Mammary epithelial cell (primary cell): ENCODE measurements at regions of chr2 and their contacts with region 1.

Region 1: DNA sequence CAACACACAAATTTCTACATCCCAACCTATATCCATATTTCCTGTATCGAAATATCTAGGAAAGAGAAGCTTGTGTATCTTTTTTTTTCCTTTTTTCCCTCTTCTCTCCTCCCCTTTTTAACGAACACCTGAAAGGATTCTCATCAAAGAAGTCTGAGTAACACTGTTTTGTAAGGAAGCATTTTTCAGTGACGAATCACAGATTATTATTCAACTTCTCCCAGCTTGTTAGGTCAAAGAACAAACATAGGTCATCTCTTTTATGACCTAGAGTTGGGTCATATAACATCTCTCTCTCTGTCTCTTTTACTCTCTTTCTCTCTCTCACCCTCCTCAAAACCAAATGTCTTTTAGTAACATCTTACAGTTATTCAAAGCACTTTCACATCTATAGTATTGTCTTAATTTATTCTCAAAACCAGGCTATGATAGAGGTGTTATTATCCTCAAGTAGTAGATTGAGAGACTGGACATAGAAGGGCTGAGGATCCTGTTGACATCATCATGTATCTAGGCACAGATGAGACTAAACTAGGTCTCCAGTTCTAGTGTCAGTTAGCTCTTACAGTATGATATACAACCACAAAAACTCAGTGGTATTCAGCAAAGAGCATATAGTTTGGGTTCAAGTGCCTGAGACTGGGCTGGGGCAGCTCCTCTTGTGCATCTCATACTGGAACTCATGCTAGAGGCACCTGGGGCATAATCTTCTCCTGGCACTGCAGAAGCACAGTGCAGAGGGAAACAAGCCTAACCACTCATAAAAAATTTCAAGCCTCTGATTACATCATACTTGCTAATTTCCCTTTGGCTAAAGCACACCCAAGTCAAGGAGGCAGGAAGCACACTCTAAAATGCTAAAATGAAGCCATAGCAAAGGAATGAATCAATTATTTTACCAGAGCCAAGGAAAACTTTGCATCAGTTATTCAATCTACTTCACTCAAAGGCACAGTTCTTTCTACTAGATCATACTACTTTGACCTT is 80.0 kb upstream of the SPOPL start:
- DNase-seq: peak; percentile 91
- H3K4me3 ChIP-seq: no peak overlapping the region
- H3K27ac ChIP-seq: peak overlapping the region; percentile 82
- H3K4me1 ChIP-seq: peaks cover 23% of the 10 kb centered on the region
- H3K27me3 ChIP-seq: no peaks in the 10 kb centered on the region
- CTCF ChIP-seq: no peak

Region 2: GRCh38 chr2:137764646-137765045 is 657.0 kb before region 1 on chr2:
- CTCF ChIA-PET with region 1: no interaction called
- dilution Hi-C with region 1: no loop called
- in situ Hi-C with region 1: no loop called
- intact Hi-C with region 1: no loop called
- DNase-seq: no peak
- H3K4me3 ChIP-seq: no peak overlapping the region
- H3K27ac ChIP-seq: no peak overlapping the region
- H3K4me1 ChIP-seq: no peaks in the 10 kb centered on the region
- H3K27me3 ChIP-seq: no peaks in the 10 kb centered on the region
- CTCF ChIP-seq: no peak

Region 3: DNA sequence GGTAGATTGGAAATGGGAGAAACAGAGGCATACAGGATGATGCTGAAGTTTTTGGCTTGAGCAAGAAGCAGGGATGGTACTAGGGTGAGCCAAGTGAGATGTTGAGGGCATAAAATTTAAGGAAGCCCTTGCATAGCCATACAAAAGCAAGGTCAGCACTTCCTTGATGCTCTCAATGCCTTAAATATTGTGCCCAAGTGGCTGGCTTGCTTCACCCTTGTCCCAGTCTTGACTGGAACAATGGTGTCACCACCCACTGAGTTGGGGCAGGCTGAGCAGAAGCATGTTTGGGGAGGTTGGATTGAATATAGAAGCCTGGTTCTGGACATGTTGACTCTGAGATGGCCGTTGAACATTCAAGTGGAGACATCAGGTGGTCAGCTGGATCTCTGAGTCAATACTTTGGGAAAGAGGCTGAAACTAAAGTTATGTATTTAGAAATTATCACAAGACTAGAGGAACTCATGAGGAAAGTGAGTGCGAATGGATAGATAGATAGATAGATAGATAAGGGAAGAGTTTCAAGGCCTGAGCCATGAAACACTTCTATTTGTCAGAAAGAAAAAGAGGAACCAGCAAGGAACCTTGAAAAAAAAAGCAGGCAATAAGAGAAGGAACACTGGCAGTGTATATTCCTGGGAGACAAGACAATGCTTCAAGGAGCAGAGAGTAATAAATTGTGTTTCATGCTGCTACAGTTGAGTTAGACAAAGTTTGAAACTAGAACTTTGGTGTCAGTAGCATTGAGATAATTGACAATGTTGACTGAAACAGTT is 500.3 kb before region 1 on chr2:
- CTCF ChIA-PET with region 1: no interaction called
- dilution Hi-C with region 1: no loop called
- in situ Hi-C with region 1: no loop called
- intact Hi-C with region 1: no loop called
- DNase-seq: no peak
- H3K4me3 ChIP-seq: no peak overlapping the region
- H3K27ac ChIP-seq: no peak overlapping the region
- H3K4me1 ChIP-seq: no peaks in the 10 kb centered on the region
- H3K27me3 ChIP-seq: no peaks in the 10 kb centered on the region
- CTCF ChIP-seq: no peak

Region 4: GRCh38 chr2:138312061-138312460 is 109.5 kb before region 1 on chr2:
- CTCF ChIA-PET with region 1: no interaction called
- dilution Hi-C with region 1: no loop called
- in situ Hi-C with region 1: no loop called
- intact Hi-C with region 1: no loop called
- DNase-seq: no peak
- H3K4me3 ChIP-seq: no peak overlapping the region
- H3K27ac ChIP-seq: no peak overlapping the region
- H3K4me1 ChIP-seq: no peaks in the 10 kb centered on the region
- H3K27me3 ChIP-seq: no peaks in the 10 kb centered on the region
- CTCF ChIP-seq: no peak

Region 5: GRCh38 chr2:138395565-138396306 is 25.9 kb before region 1 on chr2:
- CTCF ChIA-PET with region 1: no interaction called
- dilution Hi-C with region 1: no loop called
- in situ Hi-C with region 1: no loop called
- intact Hi-C with region 1: loop called (anchors 2 kb)
- DNase-seq: peak; percentile 90
- H3K4me3 ChIP-seq: no peak overlapping the region
- H3K27ac ChIP-seq: peak overlapping the region; percentile 9
- H3K4me1 ChIP-seq: peaks cover 23% of the 10 kb centered on the region
- H3K27me3 ChIP-seq: no peaks in the 10 kb centered on the region
- CTCF ChIP-seq: no peak

Region 6: GRCh38 chr2:138441916-138442315 is 20.3 kb after region 1 on chr2:
- CTCF ChIA-PET with region 1: no interaction called
- dilution Hi-C with region 1: no loop called
- in situ Hi-C with region 1: no loop called
- intact Hi-C with region 1: loop called (anchors 2 kb)
- DNase-seq: no peak
- H3K4me3 ChIP-seq: no peak overlapping the region
- H3K27ac ChIP-seq: no peak overlapping the region
- H3K4me1 ChIP-seq: peaks cover 3% of the 10 kb centered on the region
- H3K27me3 ChIP-seq: no peaks in the 10 kb centered on the region
- CTCF ChIP-seq: no peak